Spleen (tissue), 13 donors: ENCODE measurements at regions of chr7 and their contacts with region 1.

Region 1: GRCh38 chr7:130758429-130759056 is 24.5 kb upstream of the KLF14 start:
- DNase-seq: no peak
- H3K4me3 ChIP-seq: no peak overlapping the region
- H3K27ac ChIP-seq: no peak overlapping the region
- H3K4me1 ChIP-seq: no peaks in the 10 kb centered on the region
- H3K27me3 ChIP-seq: no peaks in the 10 kb centered on the region
- CTCF ChIP-seq: peak; percentile 15 to 71 (median 55)
- POLR2A ChIP-seq: no peak

Region 2: GRCh38 chr7:130069978-130070860 is 688.3 kb before region 1 on chr7 and contains the start of gene KLHDC10:
- intact Hi-C with region 1: loop called (anchors 10 kb)
- DNase-seq: peak; percentile 99
- H3K4me3 ChIP-seq: peak within 1 kb of the TSS; percentile 69 to 98 (median 94)
- H3K27ac ChIP-seq: peak within 1 kb of the TSS; percentile 77 to 92 (median 90)
- H3K4me1 ChIP-seq: peaks cover 27 to 58% (median 48%) of the 10 kb centered on the region in 6 donors
- H3K27me3 ChIP-seq: no peaks in the 10 kb centered on the region
- CTCF ChIP-seq: peak in 1 of 11 experiments; percentile 25
- POLR2A ChIP-seq: no peak
- total RNA-seq, gene KLHDC10: 21.2 to 33.7 (median 22.1) TPM